ENCODE measurements at regions of chr20 and their contacts with region 1.

Region 1: DNA sequence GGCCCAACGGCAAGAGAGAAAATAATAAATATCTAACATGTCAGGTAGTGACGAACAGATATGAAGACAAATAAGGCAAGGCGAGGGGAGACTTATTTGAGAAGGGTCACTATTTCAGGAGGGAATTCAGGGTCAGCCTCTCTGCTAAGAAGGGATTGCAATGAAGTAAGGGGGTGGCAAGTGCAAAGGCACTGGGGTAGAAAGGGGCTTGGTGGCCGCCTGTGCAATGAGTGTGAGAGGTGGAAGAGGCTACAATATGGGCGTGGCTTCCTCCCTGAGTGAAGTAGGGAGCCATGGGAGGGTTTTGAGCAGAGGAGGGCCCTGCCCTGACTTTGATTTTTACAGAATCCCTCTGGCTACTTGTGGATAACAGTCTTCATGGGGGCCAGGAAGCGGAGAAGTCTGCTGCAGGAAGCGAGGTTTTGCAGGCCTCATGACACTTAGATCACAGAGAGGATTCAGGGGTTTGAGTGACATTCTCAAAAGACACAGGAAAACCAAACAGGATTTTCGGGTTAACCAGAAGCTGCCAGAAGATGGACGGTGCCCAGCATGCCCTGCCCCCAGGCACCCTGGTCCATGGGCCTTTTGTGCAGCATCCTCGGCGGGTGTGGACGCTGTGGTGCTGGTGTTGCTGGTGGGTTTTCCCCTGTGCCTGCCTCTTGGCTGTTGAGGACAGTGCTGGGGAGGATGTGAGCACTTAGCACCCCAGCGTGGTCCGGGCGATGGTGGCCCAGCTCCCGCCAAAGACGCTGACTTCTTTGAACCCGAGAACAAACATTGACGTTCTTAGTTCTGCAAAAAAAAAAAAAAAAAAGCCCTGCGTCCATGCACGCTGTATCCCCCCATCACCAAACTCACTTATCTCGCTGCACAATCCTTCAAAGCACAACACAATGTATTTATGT is 124.2 kb upstream of the PTPN1 start:
- DNase-seq: no peak
- H3K4me3 ChIP-seq: no peak overlapping the region
- H3K27ac ChIP-seq: peak overlapping the region in 1 of 4 donors; percentile 26
- H3K4me1 ChIP-seq: peaks cover 16 to 67% (median 44%) of the 10 kb centered on the region in 4 donors
- H3K27me3 ChIP-seq: no peaks in the 10 kb centered on the region
- CTCF ChIP-seq: no peak
- EP300 ChIP-seq: no peak
- POLR2A ChIP-seq: no peak

Region 2: DNA sequence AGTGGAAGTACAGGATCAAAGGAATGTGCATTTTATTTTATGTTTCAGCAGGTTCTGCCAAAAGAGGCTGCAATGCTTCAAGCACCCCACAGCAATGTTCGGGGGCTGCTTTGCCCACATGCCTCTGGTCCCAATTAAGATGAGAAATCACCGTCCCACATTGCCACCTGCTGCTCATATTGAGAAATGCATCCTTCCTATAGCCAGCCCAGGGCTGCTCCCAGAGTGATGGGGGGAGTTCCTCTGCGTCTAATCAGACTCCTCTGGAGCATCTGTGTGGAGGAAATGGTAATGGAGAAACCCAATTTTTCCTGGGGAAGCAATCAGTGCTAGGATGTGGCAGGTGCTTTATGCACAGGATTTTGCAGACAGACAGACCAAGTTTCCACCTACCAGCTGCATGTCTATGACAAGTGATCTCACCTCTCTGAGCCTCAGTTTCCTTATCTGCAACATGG is 851.7 kb before region 1 on chr20:
- in situ Hi-C with region 1: no loop called
- intact Hi-C with region 1: no loop called
- DNase-seq: peak; percentile 52
- H3K4me3 ChIP-seq: no peak overlapping the region
- H3K27ac ChIP-seq: no peak overlapping the region
- H3K4me1 ChIP-seq: no peaks in the 10 kb centered on the region
- H3K27me3 ChIP-seq: peaks cover 5% of the 10 kb centered on the region
- CTCF ChIP-seq: peak; percentile 72 to 82 (median 80)
- EP300 ChIP-seq: no peak
- POLR2A ChIP-seq: no peak

Region 3: GRCh38 chr20:50366270-50367103 is 19.5 kb before region 1 on chr20:
- in situ Hi-C with region 1: no loop called
- intact Hi-C with region 1: loop called (anchors 1 kb)
- DNase-seq: peak; percentile 92
- H3K4me3 ChIP-seq: no peak overlapping the region
- H3K27ac ChIP-seq: peak overlapping the region; percentile 51 to 75 (median 72)
- H3K4me1 ChIP-seq: peaks cover 6 to 39% (median 24%) of the 10 kb centered on the region in 4 donors
- H3K27me3 ChIP-seq: no peaks in the 10 kb centered on the region
- CTCF ChIP-seq: no peak
- EP300 ChIP-seq: no peak
- POLR2A ChIP-seq: no peak